Endothelial cell of umbilical vein (primary cell): ENCODE measurements at regions of chr12 and their contacts with region 1.

Region 1: DNA sequence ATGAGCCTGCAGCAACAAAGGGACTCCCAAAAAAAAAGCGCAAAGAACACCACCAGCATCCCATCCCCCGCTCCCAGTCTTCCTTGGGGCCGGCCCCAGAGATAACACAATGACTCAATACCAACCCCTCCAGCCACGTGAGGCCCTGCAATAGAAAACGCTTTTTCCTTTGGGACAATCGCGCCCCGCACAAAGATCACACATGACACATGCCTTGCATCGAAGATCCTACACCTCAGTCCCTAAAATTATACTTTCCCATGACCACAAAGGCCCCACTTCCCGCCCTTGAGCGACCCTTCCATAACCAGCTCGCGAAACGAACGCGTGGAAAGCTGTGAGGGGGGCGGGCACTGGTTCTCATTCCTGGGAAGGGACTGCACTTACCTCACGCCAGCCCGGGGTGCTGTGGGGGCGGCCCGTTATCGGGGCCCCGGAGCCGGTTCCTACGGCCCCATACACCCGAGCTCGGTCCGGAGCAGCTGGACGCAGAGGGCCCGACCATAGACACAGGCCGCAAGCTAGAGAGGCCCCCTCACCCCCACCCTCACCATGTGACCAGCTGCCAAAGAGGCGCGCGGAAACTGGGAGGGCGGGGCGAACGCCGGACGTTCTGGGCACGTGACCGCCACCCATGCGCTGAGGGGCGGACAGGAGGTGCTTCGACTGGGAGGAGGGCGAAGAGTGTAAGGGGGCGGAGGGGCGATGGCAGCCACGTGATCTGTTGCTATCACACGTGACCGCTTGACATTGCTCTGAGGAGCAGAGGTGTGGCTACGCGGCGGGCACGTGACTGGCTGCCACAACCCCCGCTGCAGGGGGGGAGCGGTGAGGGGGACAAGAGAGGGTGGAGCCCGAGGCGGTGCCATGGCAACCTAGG is at the start of gene CDK4:
- DNase-seq: peak; percentile 100
- H3K4me3 ChIP-seq: peak within 1 kb of the TSS; percentile 19 to 78 (median 61)
- H3K27ac ChIP-seq: peak within 1 kb of the TSS; percentile 68
- H3K4me1 ChIP-seq: peaks cover 17% of the 10 kb centered on the region
- H3K27me3 ChIP-seq: peaks cover 22 to 28% of the 10 kb centered on the region in 2 experiments
- CTCF ChIP-seq: no peak
- POLR2A ChIP-seq: peak; percentile 84
- total RNA-seq, gene CDK4: 156 and 171 TPM in 2 replicates

Region 2: GRCh38 chr12:57765042-57765697 is 13.1 kb after region 1 on chr12:
- CTCF ChIA-PET with region 1: interaction called, 48 read pairs
- POLR2A ChIA-PET with region 1: no interaction called
- dilution Hi-C with region 1: no loop called
- intact Hi-C with region 1: no loop called
- DNase-seq: peak; percentile 44
- H3K4me3 ChIP-seq: peak overlapping the region in 1 of 3 experiments; percentile 23
- H3K27ac ChIP-seq: no peak overlapping the region
- H3K4me1 ChIP-seq: peaks cover 17% of the 10 kb centered on the region
- H3K27me3 ChIP-seq: peaks cover 35 to 38% of the 10 kb centered on the region in 2 experiments
- CTCF ChIP-seq: peak; percentile 34 to 57
- POLR2A ChIP-seq: no peak

Region 3: DNA sequence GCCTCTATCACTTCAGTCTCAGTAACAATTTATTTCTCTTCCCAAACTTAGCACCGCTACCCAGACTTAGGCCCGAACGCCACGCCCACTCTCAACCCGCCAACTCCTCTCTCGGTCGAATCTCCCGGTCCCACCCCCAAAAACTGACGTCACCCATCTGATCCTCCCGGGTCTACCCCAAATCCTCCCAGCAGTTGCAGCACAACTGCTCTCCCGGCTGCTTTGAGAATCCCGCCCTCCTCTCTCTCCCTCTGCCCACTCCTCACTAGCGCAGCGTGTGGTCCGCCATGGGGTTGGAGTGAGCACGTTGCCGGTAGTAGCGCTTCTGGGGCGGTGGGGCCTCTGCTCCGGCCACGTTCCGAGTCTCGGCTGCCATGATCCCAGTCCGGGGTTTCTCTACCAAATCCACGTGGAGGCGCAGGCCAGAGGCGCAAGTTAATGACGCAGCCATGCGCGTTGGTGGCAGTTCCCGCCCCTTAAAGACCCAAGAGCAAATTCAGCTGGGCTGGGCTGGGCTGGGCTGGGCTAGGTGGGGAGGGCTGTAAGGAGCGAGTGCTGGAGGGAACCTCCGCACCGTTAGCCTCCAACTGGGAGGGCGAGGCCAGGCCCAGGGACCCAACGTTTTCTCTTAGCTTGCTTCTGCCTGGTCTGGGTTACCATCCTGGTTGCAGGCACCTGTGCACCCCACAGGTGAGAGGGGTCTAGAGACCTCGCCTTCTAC is 19.8 kb after region 1 on chr12 and contains the start of gene METTL1:
- CTCF ChIA-PET with region 1: interaction called, 48 read pairs
- POLR2A ChIA-PET with region 1: no interaction called
- dilution Hi-C with region 1: no loop called
- intact Hi-C with region 1: loop called (anchors 1 kb)
- DNase-seq: peak; percentile 98
- H3K4me3 ChIP-seq: peak within 1 kb of the TSS; percentile 69 to 79 (median 76)
- H3K27ac ChIP-seq: peak within 1 kb of the TSS; percentile 79
- H3K4me1 ChIP-seq: peaks cover 13% of the 10 kb centered on the region
- H3K27me3 ChIP-seq: peaks cover under 1 to 5% of the 10 kb centered on the region in 2 experiments
- CTCF ChIP-seq: no peak
- POLR2A ChIP-seq: peak; percentile 75
- total RNA-seq, gene METTL1: 24.3 and 24.8 TPM in 2 replicates

Region 4: DNA sequence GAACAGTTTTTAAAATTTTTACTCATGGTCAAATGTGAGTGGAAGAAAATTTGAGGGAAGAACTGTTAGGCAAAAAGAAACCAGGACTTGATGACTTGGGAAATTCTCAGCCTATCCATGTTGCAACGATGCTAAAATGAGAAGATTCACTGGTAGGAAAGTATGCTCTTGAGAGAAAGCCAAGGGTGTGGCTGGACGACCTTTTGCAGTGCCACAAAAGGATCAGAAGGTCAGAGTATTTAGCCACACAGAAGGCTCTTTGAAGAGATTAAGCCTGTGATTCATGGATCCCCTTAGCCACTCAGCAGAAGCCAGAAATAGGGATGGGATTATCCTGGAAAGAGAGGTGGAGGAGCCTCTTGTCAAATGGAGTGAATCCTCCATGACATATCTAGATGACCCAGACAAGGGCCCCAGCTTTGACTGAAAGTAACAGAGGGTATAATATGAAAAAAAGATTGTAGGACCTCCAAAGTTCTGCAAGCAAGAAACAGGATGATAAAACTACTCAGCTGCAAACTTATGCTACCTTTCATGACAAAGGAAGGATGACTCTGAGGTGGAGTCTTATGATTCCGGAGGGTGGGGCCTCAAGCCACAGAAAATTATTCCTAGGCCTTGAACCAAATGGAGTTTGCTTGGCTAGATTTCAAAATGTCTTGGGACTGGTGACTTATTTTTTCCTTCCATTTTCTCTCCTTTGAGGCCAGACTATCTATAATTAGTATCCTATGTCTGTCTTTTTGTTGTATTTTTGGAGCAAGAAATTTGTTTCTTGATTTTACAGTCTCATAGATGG is 831.7 kb after region 1 on chr12:
- CTCF ChIA-PET with region 1: no interaction called
- POLR2A ChIA-PET with region 1: no interaction called
- dilution Hi-C with region 1: no loop called
- intact Hi-C with region 1: no loop called
- DNase-seq: no peak
- H3K4me3 ChIP-seq: no peak overlapping the region
- H3K27ac ChIP-seq: no peak overlapping the region
- H3K4me1 ChIP-seq: no peaks in the 10 kb centered on the region
- H3K27me3 ChIP-seq: no peaks in the 10 kb centered on the region
- CTCF ChIP-seq: no peak
- POLR2A ChIP-seq: no peak